ENCODE measurements at regions of chr1 and their contacts with region 1.

Region 1: GRCh38 chr1:26279456-26280332 is at the start of gene SH3BGRL3:
- DNase-seq: peak; percentile 82
- H3K4me3 Mint-ChIP-seq: peak within 1 kb of the TSS; percentile 81
- H3K27ac Mint-ChIP-seq: peak within 1 kb of the TSS; percentile 92
- H3K4me1 Mint-ChIP-seq: peaks cover 58% of the 10 kb centered on the region
- H3K27me3 Mint-ChIP-seq: no peaks in the 10 kb centered on the region
- CTCF ChIP-seq: no peak
- total RNA-seq, gene SH3BGRL3: 74.6 and 107 TPM in 2 replicates

Region 2: GRCh38 chr1:26321315-26322041 is 41.8 kb after region 1 on chr1:
- CTCF ChIA-PET with region 1: interaction called, 6 read pairs
- intact Hi-C with region 1: loop called (anchors 2 kb)
- DNase-seq: peak; percentile 88
- H3K4me3 Mint-ChIP-seq: no peak overlapping the region
- H3K27ac Mint-ChIP-seq: no peak overlapping the region
- H3K4me1 Mint-ChIP-seq: peaks cover 8% of the 10 kb centered on the region
- H3K27me3 Mint-ChIP-seq: no peaks in the 10 kb centered on the region
- CTCF ChIP-seq: peak; percentile 66

Region 3: DNA sequence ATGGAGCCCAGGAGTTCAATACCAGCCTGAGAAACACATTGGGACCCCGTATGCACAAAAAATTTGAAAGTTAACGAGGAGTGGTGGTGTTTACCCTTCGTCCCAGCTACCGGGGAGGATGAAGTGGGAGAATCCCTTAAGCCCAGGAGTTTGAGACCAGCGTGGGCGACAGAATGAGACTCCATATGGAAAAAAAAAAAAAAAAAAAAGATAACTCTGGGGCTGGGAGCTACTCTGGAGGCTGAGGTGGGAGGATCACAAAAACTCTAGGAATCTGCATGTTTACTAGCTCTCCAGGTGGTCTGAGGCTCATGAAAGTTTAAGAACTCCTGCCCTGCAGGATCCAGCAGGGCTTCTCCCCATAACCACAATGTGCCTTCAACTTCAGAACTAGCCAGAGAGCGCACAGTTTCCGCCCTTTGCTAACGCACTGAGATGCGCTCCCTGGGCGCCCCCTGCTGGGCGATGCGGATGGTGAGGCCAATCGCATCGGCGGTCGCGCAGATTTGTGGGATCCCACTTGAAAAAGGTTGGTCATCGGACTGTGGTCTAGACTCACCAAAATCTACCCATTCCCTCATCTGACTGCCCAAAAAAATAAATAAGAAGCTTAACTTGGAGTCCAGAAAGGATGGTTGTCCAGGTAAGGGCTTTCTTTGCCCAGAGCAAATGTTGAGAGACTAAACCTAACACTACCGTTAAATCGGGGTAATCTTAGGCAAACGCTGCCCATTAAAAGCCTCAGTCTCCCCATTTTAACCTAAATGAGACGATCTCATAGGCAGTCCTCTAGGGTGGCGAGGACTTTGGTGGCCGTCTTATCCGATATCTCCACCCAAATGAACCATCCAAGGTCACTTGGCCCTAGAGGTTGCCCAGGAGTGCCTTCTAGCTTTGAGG is 84.1 kb after region 1 on chr1:
- CTCF ChIA-PET with region 1: interaction called, 5 read pairs
- intact Hi-C with region 1: loop called (anchors 5 kb)
- DNase-seq: peak; percentile 88
- H3K4me3 Mint-ChIP-seq: no peak overlapping the region
- H3K27ac Mint-ChIP-seq: no peak overlapping the region
- H3K4me1 Mint-ChIP-seq: peaks cover 14% of the 10 kb centered on the region
- H3K27me3 Mint-ChIP-seq: peaks cover 16% of the 10 kb centered on the region
- CTCF ChIP-seq: peak; percentile 74

Region 4: DNA sequence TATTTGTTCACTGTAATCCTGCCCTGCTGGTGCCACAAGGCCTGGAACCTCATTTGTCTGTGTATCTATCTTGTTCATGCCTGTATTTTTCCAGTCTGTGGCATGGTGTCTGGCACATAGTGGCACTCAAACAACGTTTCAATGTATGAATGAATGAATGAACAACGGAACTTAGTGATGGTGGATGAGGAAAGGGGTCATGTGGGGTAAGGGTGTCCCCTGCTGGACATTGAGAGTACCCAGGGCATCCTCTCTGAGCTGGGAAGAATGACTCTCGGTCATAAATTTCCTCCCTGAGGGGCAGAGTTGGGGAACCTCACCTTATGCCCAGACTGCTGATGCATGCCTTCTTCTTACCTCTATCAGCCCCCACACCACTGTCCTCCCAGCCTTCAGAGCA is 111.8 kb after region 1 on chr1:
- CTCF ChIA-PET with region 1: interaction called, 3 read pairs
- intact Hi-C with region 1: loop called (anchors 10 kb)
- DNase-seq: peak; percentile 39
- H3K4me3 Mint-ChIP-seq: no peak overlapping the region
- H3K27ac Mint-ChIP-seq: no peak overlapping the region
- H3K4me1 Mint-ChIP-seq: peaks cover 16% of the 10 kb centered on the region
- H3K27me3 Mint-ChIP-seq: peaks cover 28% of the 10 kb centered on the region
- CTCF ChIP-seq: no peak

Region 5: GRCh38 chr1:26434161-26434752 is 154.6 kb after region 1 on chr1:
- CTCF ChIA-PET with region 1: no interaction called
- intact Hi-C with region 1: no loop called
- DNase-seq: no peak
- H3K4me3 Mint-ChIP-seq: no peak overlapping the region
- H3K27ac Mint-ChIP-seq: no peak overlapping the region
- H3K4me1 Mint-ChIP-seq: no peaks in the 10 kb centered on the region
- H3K27me3 Mint-ChIP-seq: no peaks in the 10 kb centered on the region
- CTCF ChIP-seq: no peak